ENCODE measurements at regions of chr15 and their contacts with region 1.

Region 1: DNA sequence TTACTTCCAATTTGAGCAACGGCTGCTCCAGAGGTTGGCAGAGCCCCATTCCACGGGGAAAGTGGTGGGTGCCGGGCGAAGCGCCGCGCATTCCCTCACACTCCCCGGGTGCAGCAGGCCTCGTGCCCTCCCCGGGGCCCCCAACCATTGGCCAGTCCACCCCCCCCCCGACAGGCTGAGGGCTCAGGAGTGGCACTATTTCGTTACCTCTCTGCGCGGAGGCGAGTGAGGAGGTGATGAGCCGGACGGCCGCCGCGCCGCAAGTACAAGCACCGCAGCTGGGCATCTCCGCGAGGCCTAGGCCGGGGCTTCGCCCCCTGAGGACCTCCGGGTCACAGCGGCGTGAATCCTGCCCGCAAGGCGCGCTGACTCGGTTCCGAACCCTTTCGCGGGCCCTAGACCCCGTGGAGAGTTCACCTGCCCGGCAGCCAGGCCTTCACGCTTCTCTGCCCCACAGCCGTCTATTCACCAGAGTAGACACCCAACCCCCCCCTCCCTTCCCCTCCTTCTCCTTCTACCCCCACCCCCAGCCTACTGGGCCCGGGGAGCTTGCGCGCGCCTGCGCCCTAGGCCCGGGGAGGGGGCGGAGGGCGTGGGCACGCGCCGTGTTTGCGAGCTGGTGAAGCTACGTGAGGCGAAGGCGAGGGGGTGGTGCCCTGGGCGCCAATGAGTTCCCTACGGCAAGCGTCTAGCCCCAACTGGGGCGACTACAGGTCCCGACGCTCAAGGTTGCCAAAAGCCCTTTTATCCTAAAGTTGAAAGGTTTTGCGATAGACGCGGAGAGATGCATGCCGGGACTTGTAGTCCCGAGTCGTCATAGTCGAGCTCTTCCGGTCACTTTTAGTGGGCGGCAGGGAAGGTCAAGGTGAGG is at the start of gene CLPX:
- DNase-seq: peak; percentile 74 to 93 (median 90)
- H3K4me3 ChIP-seq: peak within 1 kb of the TSS; percentile 66 to 100 (median 94)
- H3K27ac ChIP-seq: peak within 1 kb of the TSS; percentile 80 to 99 (median 96)
- H3K27me3 ChIP-seq: no peaks in the 10 kb centered on the region
- CTCF ChIP-seq: peak in 17 of 56 donors; percentile 4 to 40 (median 17)
- total RNA-seq, gene CLPX: 35.4 to 71.8 (median 55.5) TPM

Region 2: DNA sequence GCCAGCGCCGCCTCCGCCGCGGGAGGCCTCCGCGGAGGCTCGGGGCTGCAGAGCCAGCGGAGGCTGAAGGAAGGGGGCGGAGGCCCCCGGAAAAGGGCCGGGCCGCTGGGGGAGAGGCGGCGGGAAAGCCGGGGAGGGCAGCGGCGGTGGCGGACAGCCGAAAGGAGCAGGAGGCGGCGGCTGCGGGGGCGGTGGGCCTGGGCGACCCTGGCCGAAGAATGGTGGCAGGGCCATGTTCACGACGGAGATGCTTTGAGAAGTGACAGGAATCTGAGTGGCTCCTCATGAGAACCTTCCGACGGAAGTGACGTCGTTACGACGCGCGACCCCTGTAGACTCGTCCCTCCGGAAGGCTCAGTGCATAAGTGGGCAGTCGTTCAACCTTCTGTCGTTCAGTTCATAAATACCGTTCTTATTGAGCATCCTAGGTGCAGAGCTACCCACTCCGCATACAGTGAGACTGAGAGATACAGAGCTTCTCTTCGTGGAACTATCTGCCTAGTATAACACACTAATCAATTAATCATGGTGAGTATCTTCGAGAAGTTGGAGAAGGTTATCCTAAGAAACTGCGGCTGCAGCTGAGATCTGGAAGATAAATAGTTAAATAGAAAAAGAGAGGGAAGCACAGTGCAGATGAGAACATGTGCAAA is 51.4 kb before region 1 on chr15 and contains the start of gene PDCD7:
- intact Hi-C with region 1: loop called (anchors 2 to 5 kb)
- DNase-seq: peak; percentile 90 to 97 (median 94)
- H3K4me3 ChIP-seq: peak within 1 kb of the TSS; percentile 62 to 96 (median 82)
- H3K27ac ChIP-seq: peak within 1 kb of the TSS; percentile 6 to 91 (median 79)
- H3K27me3 ChIP-seq: no peaks in the 10 kb centered on the region
- CTCF ChIP-seq: peak in 19 of 56 donors; percentile 11 to 42 (median 24)
- total RNA-seq, gene PDCD7: 30.9 to 71.7 (median 44.6) TPM

Region 3: GRCh38 chr15:65275728-65276126 is 90.6 kb after region 1 on chr15:
- intact Hi-C with region 1: loop called in 1 of 2 experiments (anchors 2 kb)
- DNase-seq: no peak
- H3K4me3 ChIP-seq: no peak overlapping the region
- H3K27ac ChIP-seq: no peak overlapping the region
- H3K27me3 ChIP-seq: no peaks in the 10 kb centered on the region
- CTCF ChIP-seq: no peak

Region 4: GRCh38 chr15:65292938-65293518 is 107.9 kb after region 1 on chr15:
- intact Hi-C with region 1: loop called in 1 of 2 experiments (anchors 2 kb)
- DNase-seq: no peak
- H3K4me3 ChIP-seq: no peak overlapping the region
- H3K27ac ChIP-seq: peak overlapping the region in 1 of 59 donors; percentile 36
- H3K27me3 ChIP-seq: no peaks in the 10 kb centered on the region
- CTCF ChIP-seq: no peak

Region 5: DNA sequence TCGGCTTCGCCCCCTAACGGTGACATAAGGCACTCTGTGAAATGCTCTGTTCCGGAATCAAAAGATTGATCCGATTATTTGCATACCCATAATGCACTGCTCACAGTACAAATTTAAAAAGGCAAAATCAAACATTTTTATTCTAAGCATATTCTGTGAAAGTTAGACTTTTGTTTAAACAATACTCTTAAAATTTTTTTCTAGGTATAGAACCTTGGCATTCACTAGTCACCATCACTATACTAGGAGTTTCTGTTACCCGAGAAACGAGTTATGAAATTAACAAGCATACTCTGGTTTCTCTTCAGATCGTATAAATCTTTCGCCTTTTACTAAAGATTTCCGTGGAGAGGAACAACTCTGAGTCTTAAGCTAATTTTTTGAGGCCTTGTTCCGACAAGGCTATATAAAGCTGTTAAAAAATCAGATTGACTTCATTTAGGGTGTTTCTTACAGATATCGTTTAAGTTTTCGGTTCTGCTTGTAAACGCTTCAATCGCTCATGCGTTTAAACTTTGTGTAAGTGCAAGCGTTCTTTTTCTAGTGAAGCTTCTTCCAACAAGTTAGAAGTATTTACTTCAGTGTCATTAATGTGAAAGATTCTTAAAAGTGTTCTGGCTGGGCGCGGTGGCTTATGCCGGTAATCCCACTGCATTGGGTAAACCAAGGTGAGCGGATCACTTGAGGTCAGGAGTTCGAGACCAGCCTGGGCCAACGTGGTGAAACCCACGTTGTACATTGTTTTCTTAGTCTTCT is 119.5 kb after region 1 on chr15 and contains the start of gene RNU5B-1:
- intact Hi-C with region 1: loop called in 1 of 2 experiments (anchors 2 kb)
- DNase-seq: peak; percentile 29 to 83 (median 73)
- H3K4me3 ChIP-seq: peak within 1 kb of the TSS; percentile 41 to 82 (median 66)
- H3K27ac ChIP-seq: peak within 1 kb of the TSS; percentile 65 to 99 (median 95)
- H3K27me3 ChIP-seq: no peaks in the 10 kb centered on the region
- CTCF ChIP-seq: peak; percentile 7 to 95 (median 85)
- total RNA-seq, gene RNU5B-1: 23.0 to 207 (median 47.4) TPM in 74 of 120 experiments, not detected in the others

Region 6: GRCh38 chr15:65384895-65385858 is 200.1 kb after region 1 on chr15:
- intact Hi-C with region 1: loop called (anchors 5 to 10 kb)
- DNase-seq: peak; percentile 85 to 92 (median 90)
- H3K4me3 ChIP-seq: peak overlapping the region; percentile 3 to 65 (median 49)
- H3K27ac ChIP-seq: peak overlapping the region in 58 of 59 donors; percentile 3 to 90 (median 78)
- H3K27me3 ChIP-seq: no peaks in the 10 kb centered on the region
- CTCF ChIP-seq: peak; percentile 72 to 97 (median 90)